Activated T-helper 1 cell treated with anti-CD3 and anti-CD28 coated beads, Interleukin-12 subunit alpha, Interleukin-12 subunit beta, Interleukin-2, Interleukin-4 antibody, amounts not matched to agents 30 ng/mL and 10 ng/mL and 1 ng/mL, durations not matched to agents 14 hours and 24 hours and 36 hours (primary cell): ENCODE measurements at regions of chr10 and their contacts with region 1.

Region 1: DNA sequence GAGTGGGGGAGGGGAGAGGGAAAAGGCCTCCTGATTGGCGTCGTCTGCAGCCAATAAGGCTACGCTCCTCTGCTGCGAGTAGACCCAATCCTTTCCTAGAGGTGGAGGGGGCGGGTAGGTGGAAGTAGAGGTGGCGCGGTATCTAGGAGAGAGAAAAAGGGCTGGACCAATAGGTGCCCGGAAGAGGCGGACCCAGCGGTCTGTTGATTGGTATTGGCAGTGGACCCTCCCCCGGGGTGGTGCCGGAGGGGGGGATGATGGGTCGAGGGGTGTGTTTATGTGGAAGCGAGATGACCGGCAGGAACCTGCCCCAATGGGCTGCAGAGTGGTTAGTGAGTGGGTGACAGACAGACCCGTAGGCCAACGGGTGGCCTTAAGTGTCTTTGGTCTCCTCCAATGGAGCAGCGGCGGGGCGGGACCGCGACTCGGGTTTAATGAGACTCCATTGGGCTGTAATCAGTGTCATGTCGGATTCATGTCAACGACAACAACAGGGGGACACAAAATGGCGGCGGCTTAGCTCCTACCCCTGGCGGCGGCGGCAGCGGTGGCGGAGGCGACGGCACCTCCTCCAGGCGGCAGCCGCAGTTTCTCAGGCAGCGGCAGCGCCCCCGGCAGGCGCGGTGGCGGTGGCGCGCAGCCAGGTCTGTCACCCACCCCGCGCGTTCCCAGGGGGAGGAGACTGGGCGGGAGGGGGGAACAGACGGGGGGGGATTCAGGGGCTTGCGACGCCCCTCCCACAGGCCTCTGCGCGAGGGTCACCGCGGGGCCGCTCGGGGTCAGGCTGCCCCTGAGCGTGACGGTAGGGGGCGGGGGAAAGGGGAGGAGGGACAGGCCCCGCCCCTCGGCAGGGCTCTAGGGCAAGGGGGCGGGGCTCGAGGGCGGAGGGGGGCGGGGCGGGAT is at the start of gene KAT6B:
- DNase-seq: peak; percentile 100
- H3K4me3 Mint-ChIP-seq: peak within 1 kb of the TSS; percentile 88
- H3K27ac Mint-ChIP-seq: peak within 1 kb of the TSS; percentile 95
- H3K4me1 Mint-ChIP-seq: peaks cover 49% of the 10 kb centered on the region
- H3K27me3 Mint-ChIP-seq: no peaks in the 10 kb centered on the region
- total RNA-seq, gene KAT6B: 24.6 and 26.9 TPM in 2 replicates

Region 2: DNA sequence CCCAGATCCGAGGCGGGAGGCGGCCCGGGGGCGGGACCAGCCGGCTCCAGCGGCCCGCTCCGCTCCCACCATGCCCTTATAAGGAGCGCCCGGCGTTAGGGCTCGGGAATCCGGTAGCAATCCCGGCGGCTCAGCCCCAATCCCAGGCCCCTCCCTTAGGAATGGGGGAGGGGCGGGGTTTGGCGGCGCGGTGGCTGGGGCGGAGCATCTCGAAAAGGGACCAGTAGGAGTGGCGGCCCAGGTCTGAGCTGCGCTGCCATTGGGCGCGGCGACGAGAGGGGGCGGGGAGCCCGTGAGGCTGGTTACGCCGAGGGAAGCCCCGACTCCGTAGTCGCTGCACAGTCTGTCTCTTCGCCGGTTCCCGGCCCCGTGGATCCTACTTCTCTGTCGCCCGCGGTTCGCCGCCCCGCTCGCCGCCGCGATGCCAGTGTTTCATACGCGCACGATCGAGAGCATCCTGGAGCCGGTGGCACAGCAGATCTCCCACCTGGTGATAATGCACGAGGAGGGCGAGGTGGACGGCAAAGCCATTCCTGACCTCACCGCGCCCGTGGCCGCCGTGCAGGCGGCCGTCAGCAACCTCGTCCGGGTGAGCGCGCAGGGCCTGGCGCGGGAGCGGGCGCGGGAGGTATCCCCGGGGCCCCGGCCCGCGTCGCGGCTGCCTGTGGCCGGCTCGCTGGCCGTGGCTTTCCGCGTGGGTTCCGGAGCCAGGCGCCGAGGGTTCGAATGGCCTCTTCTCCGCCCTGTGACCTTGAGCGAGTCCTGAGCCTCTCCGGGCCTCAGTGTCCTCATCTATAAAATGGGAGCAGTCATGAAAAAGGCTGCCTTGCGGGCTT is 828.4 kb before region 1 on chr10 and contains the start of gene VCL:
- intact Hi-C with region 1: no loop called
- DNase-seq: peak; percentile 95
- H3K4me3 Mint-ChIP-seq: peak within 1 kb of the TSS; percentile 98
- H3K27ac Mint-ChIP-seq: peak within 1 kb of the TSS; percentile 100
- H3K4me1 Mint-ChIP-seq: peaks cover 59% of the 10 kb centered on the region
- H3K27me3 Mint-ChIP-seq: no peaks in the 10 kb centered on the region
- total RNA-seq, gene VCL: 24.4 and 26.0 TPM in 2 replicates

Region 3: GRCh38 chr10:74151056-74151878 is 675.1 kb before region 1 on chr10 and contains the start of gene ADK:
- intact Hi-C with region 1: loop called (anchors 1 kb)
- DNase-seq: peak; percentile 99
- H3K4me3 Mint-ChIP-seq: no peak within 1 kb of the TSS
- H3K27ac Mint-ChIP-seq: peak within 1 kb of the TSS; percentile 69
- H3K4me1 Mint-ChIP-seq: peaks cover 29% of the 10 kb centered on the region
- H3K27me3 Mint-ChIP-seq: no peaks in the 10 kb centered on the region
- total RNA-seq, gene ADK: 47.4 and 50.8 TPM in 2 replicates

Region 4: DNA sequence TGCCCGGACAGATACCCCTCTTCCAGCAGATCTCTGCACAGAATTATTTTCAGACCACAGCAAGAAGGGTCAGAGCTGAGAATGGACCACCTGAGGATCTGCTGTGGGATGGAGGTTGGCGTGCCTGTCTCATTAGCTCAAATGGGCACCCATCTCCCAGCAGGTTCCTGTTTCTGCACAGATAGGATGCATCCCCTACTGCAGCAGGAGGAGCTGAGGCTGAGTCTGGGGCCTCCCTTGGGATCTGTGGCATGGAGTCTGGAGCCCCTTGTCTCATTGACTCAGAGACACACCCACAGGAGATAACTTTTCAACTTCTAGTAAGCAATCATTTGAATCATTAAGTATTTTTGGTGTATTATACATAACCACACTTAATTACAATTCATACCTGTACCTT is 462.7 kb before region 1 on chr10:
- intact Hi-C with region 1: no loop called
- DNase-seq: no peak
- H3K4me3 Mint-ChIP-seq: no peak overlapping the region
- H3K27ac Mint-ChIP-seq: no peak overlapping the region
- H3K4me1 Mint-ChIP-seq: peaks cover 18% of the 10 kb centered on the region
- H3K27me3 Mint-ChIP-seq: no peaks in the 10 kb centered on the region

Region 5: DNA sequence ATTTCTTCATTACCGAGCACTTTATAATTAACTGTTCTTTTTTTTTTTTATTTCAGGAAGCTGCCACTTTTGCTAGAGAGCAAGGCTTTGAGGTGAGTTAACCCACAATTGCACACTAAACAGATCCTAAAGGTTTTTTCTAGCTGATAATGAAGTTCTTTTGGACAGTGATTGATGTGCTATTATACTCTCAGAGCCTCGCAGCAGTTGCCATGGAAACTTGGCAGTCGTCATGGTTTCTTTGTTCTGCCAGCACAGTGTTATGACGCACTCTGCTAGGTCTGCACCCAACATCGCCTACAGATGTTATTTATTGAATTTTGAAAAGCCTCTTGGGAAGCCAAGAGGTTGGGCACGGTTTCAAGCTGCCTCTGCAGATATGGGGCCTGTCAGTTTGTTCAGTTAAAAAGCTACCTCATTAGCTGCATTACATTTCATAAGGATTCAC is 237.1 kb before region 1 on chr10:
- intact Hi-C with region 1: loop called (anchors 1 kb)
- DNase-seq: peak; percentile 75
- H3K4me3 Mint-ChIP-seq: peak overlapping the region; percentile 54
- H3K27ac Mint-ChIP-seq: peak overlapping the region; percentile 91
- H3K4me1 Mint-ChIP-seq: peaks cover 74% of the 10 kb centered on the region
- H3K27me3 Mint-ChIP-seq: no peaks in the 10 kb centered on the region

Region 6: GRCh38 chr10:74854610-74855009 is 28.2 kb after region 1 on chr10:
- intact Hi-C with region 1: loop called (anchors 1 kb)
- DNase-seq: no peak
- H3K4me3 Mint-ChIP-seq: peak overlapping the region; percentile 51
- H3K27ac Mint-ChIP-seq: peak overlapping the region; percentile 80
- H3K4me1 Mint-ChIP-seq: peaks cover 31% of the 10 kb centered on the region
- H3K27me3 Mint-ChIP-seq: no peaks in the 10 kb centered on the region

Region 7: DNA sequence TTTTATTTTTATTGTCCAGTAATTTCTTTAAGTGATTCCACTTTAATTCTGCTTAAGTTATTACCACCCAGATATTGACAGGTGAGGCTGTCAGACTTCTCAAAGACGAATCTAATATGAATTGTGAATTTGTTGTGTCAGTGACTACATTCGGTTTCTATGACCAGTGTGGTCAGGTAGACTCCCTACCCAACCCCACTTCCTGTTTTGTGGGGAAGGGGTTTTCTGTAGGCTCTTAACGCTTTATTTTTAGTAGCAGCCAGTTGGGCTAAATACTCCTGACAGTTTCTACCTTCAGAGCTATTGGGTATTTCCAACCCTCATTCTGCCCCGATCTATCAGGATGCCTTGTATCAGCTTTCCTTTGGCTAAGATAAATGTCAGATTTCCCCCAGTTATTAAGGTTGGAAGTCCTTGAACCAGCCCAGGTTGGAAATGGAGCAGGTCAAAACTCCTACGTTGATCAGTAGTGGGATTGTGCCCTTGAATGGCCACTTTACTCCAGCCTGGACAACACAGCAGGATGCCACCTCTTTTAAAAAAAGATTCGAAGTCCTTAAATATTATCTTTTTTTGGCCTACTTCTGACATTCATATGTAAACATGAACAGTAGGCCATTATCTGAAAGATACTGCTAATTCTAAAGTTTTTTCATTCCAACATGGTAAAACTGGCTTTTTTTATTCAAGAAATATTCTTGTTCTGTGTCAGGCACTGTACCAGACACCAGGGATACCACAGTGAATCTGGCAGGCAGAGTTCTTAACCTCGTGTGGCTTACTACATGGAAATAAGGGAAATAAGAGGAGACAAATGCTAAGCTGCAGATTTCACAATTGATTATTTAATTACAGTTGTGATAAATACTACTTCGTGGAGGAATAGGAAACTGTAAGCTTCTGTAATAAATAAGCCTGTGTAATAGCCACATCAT is 151.8 kb after region 1 on chr10:
- intact Hi-C with region 1: loop called (anchors 1 kb)
- DNase-seq: peak; percentile 68
- H3K4me3 Mint-ChIP-seq: peak overlapping the region; percentile 47
- H3K27ac Mint-ChIP-seq: peak overlapping the region; percentile 75
- H3K4me1 Mint-ChIP-seq: peaks cover 55% of the 10 kb centered on the region
- H3K27me3 Mint-ChIP-seq: no peaks in the 10 kb centered on the region

Region 8: DNA sequence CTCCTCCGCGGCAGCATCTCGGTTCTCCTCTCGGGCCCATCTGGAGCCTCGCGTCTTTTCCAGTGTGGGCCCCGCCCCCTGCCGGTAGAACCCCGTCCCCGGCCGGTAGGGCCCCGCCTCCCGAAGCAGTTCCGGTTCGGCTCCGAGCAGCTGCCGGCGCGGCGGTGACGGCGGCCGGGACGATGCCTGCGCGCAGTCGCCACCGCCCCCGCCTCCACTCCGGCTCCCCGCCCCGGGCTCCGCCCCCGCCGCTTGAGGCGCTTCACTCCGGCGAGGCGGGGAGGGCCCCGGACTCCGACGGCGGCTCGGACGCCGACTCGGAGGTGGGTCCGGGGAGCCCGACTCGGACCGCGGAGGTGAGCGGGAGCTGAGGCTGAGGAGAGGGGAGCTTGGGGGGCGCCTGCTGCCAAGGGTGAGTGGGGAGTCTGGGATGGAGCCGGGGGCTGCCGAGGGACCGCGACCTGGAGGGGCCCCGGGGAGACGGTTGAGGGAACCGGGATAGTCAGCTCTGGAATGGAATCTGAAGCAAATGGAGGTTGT is 285.0 kb after region 1 on chr10 and contains the start of gene SAMD8:
- intact Hi-C with region 1: loop called (anchors 1 kb)
- DNase-seq: peak; percentile 97
- H3K4me3 Mint-ChIP-seq: peak within 1 kb of the TSS; percentile 95
- H3K27ac Mint-ChIP-seq: peak within 1 kb of the TSS; percentile 99
- H3K4me1 Mint-ChIP-seq: peaks cover 50% of the 10 kb centered on the region
- H3K27me3 Mint-ChIP-seq: no peaks in the 10 kb centered on the region
- total RNA-seq, gene SAMD8: 16.2 and 16.5 TPM in 2 replicates